Activated CD4-positive, alpha-beta T cell treated with anti-CD3 and anti-CD28 coated beads for 36 hours (primary cell): ENCODE measurements at regions of chr3 and their contacts with region 1.

Region 1: GRCh38 chr3:37308247-37308646 is 133.9 kb upstream of the LRRFIP2 start:
- DNase-seq: no peak
- ATAC-seq: no peak
- H3K4me3 Mint-ChIP-seq: no peak overlapping the region
- H3K27ac Mint-ChIP-seq: no peak overlapping the region
- H3K4me1 Mint-ChIP-seq: peaks cover 16% of the 10 kb centered on the region
- H3K27me3 Mint-ChIP-seq: no peaks in the 10 kb centered on the region

Region 2: GRCh38 chr3:37295925-37296324 is 12.3 kb before region 1 on chr3:
- CTCF ChIA-PET with region 1: interaction called, 10 read pairs
- POLR2A ChIA-PET with region 1: no interaction called
- intact Hi-C with region 1: no loop called
- DNase-seq: no peak
- ATAC-seq: no peak
- H3K4me3 Mint-ChIP-seq: no peak overlapping the region
- H3K27ac Mint-ChIP-seq: no peak overlapping the region
- H3K4me1 Mint-ChIP-seq: peaks cover 13% of the 10 kb centered on the region
- H3K27me3 Mint-ChIP-seq: no peaks in the 10 kb centered on the region

Region 3: GRCh38 chr3:37320276-37320675 is 12.0 kb after region 1 on chr3:
- CTCF ChIA-PET with region 1: interaction called, 11 read pairs
- POLR2A ChIA-PET with region 1: no interaction called
- intact Hi-C with region 1: no loop called
- DNase-seq: peak; percentile 54
- ATAC-seq: peak; percentile 74
- H3K4me3 Mint-ChIP-seq: no peak overlapping the region
- H3K27ac Mint-ChIP-seq: no peak overlapping the region
- H3K4me1 Mint-ChIP-seq: peaks cover 40% of the 10 kb centered on the region
- H3K27me3 Mint-ChIP-seq: no peaks in the 10 kb centered on the region

Region 4: GRCh38 chr3:37779289-37780152 is 471.3 kb after region 1 on chr3:
- CTCF ChIA-PET with region 1: no interaction called
- POLR2A ChIA-PET with region 1: no interaction called
- intact Hi-C with region 1: loop called in 1 of 2 experiments (anchors 10 kb)
- DNase-seq: peak; percentile 29
- ATAC-seq: no peak
- H3K4me3 Mint-ChIP-seq: no peak overlapping the region
- H3K27ac Mint-ChIP-seq: no peak overlapping the region
- H3K4me1 Mint-ChIP-seq: peaks cover 6% of the 10 kb centered on the region
- H3K27me3 Mint-ChIP-seq: peaks cover 3% of the 10 kb centered on the region